ENCODE measurements at regions of chr17 and their contacts with region 1.

Region 1: GRCh38 chr17:5055543-5055942 is 20.3 kb upstream of the SLC52A1 start:
- DNase-seq: no peak
- H3K4me3 Mint-ChIP-seq: no peak overlapping the region
- H3K27ac Mint-ChIP-seq: no peak overlapping the region
- H3K4me1 Mint-ChIP-seq: peaks cover 1% of the 10 kb centered on the region
- H3K27me3 Mint-ChIP-seq: peaks cover 4% of the 10 kb centered on the region

Region 2: DNA sequence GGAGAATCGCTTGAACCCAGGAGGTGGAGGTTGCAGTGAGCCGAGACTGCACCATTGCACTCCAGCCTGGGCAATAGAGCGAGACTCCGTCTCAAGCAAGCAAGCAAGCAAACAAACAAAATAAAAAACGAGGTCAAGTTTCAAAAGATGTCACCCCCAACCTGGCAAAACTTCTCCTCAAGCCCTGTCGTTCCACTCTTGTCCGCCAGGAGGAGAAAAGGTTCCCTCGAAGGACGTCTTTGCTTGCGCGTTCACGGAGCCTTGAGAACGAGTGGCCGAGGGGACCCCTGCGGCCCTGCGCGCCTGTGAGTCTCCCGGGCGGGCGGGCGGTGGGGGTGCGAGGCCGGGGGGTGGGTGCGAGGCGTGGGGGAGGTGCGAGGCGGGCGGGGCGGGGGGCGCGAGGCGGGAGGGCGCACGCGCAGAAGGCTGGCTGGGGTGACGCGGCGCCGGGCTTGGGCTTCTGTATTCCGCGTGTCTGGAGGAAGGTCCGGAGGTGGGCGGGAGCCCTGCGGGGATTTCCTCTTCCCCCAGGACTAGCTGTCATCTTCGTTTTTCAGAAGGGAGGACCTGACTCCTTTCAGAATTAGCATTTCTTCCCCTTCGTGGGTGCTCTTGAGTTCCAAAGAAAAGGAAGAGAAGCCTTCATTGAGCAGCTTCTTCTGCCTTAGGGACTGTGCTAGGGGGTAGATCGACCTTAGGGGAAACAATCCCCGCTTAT is 24.0 kb before region 1 on chr17:
- CTCF ChIA-PET with region 1: interaction called, 21 read pairs
- DNase-seq: peak; percentile 90
- H3K4me3 Mint-ChIP-seq: peak overlapping the region; percentile 80
- H3K27ac Mint-ChIP-seq: peak overlapping the region; percentile 95
- H3K4me1 Mint-ChIP-seq: peaks cover 34% of the 10 kb centered on the region
- H3K27me3 Mint-ChIP-seq: peaks cover 24% of the 10 kb centered on the region